IMR-90 (cell line): ENCODE measurements at regions of chr5 and their contacts with region 1.

Region 1: GRCh38 chr5:148224131-148224742 is 14.1 kb upstream of the MARCOL start:
- DNase-seq: no peak
- ATAC-seq: no peak
- H3K4me3 ChIP-seq: no peak overlapping the region
- H3K27ac ChIP-seq: no peak overlapping the region
- H3K4me1 ChIP-seq: no peaks in the 10 kb centered on the region
- H3K27me3 ChIP-seq: no peaks in the 10 kb centered on the region
- CTCF ChIP-seq: no peak
- POLR2A ChIP-seq: no peak
- RAD21 ChIP-seq: no peak

Region 2: GRCh38 chr5:148336704-148337435 is 112.6 kb after region 1 on chr5:
- CTCF ChIA-PET with region 1: no interaction called
- POLR2A ChIA-PET with region 1: no interaction called
- dilution Hi-C with region 1: no loop called
- in situ Hi-C with region 1: no loop called
- intact Hi-C with region 1: loop called (anchors 5 kb)
- DNase-seq: no peak
- ATAC-seq: no peak
- H3K4me3 ChIP-seq: no peak overlapping the region
- H3K27ac ChIP-seq: no peak overlapping the region
- H3K4me1 ChIP-seq: no peaks in the 10 kb centered on the region
- H3K27me3 ChIP-seq: no peaks in the 10 kb centered on the region
- CTCF ChIP-seq: no peak
- POLR2A ChIP-seq: no peak
- RAD21 ChIP-seq: no peak